Posterior vena cava (tissue), 2 donors: ENCODE measurements at regions of chrX and their contacts with region 1.

Region 1: GRCh38 chrX:8939344-8939743 is 94.6 kb downstream of the FAM9B start:
- DNase-seq: no peak

Region 2: GRCh38 chrX:9249051-9249846 is 309.9 kb after region 1 on chrX:
- intact Hi-C with region 1: no loop called
- DNase-seq: no peak

Region 3: GRCh38 chrX:9515973-9516538 is 576.7 kb after region 1 on chrX:
- intact Hi-C with region 1: loop called in 1 of 2 experiments (anchors 5 kb)
- DNase-seq: no peak

Region 4: GRCh38 chrX:9797384-9798355 is 858.3 kb after region 1 on chrX:
- intact Hi-C with region 1: no loop called
- DNase-seq: peak; percentile 34